ENCODE measurements at regions of chr11 and their contacts with region 1.

Region 1: DNA sequence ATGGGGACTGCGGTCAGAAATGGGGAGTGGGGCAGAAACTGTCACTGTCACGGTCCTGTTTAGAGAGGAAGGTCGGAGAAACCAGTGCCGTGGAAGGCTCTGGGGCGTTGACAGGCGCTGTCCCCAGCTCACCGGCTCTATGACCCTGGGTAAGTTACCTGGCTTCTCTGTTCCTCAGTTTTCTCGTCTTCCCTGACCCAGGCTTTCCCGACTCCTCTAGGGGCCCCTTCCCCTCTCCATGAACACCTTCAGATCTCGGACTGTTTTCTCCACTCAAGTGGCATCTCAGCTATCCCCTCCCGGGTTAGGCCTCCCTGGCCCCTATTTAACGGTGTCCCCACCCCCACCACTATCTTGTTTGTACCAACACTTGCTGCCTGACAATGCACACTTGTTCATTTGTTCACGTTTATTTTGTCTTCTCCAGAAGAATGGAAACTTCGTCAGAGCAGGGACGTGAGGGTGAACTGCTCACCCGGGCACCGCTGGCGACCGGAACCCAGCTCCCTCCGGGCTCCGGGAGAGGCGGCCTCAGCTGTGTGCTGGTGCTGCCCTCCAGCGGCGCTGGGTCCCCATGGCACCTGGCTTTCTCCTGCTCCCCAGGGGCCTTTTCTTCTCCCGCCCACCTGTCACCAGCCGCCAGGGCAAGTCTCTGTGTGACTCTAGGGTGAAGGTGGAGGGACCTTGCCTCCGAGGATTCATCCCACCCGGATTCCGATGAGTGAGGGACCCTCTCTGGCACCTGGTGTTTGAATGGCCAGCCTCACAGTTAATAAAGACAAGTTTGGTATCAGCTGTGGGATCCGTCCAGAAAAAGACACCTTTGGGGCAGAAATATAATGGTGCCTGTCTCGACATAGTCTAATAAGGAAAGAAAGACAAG is 33.1 kb upstream of the SLC35C1 start:
- DNase-seq: peak; percentile 92
- ATAC-seq: peak; percentile 93
- H3K4me3 Mint-ChIP-seq: peak overlapping the region; percentile 78
- H3K27ac Mint-ChIP-seq: no peak overlapping the region
- H3K4me1 Mint-ChIP-seq: peaks cover 2% of the 10 kb centered on the region; the same call in 1 of the 2 replicates
- H3K27me3 Mint-ChIP-seq: peaks cover 12% of the 10 kb centered on the region
- CTCF ChIP-seq: peak; percentile 65

Region 2: DNA sequence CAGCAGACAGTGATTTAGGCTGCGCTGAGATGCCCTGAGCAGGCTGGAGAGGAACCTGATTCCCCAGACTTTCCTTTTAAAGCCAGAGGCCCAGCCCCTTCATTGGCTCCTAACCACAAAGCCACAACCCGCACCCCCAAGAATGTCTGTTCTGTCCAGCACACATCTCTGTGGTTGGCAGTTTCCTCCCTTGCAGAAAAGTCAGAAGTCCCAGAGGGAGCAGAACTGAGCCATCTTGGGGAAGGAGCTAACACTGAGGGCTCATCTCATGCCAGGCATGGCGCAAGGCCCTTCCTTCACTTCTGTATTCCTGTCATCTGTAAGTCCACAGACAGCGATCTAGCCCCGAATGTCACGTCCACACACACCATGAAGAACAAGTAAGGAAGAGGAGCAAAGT is 388.6 kb before region 1 on chr11:
- CTCF ChIA-PET with region 1: interaction called, 10 read pairs
- POLR2A ChIA-PET with region 1: no interaction called
- DNase-seq: no peak
- ATAC-seq: no peak
- H3K4me3 Mint-ChIP-seq: no peak overlapping the region
- H3K27ac Mint-ChIP-seq: no peak overlapping the region
- H3K4me1 Mint-ChIP-seq: peaks cover 12% of the 10 kb centered on the region
- H3K27me3 Mint-ChIP-seq: peaks cover 7% of the 10 kb centered on the region
- CTCF ChIP-seq: no peak

Region 3: GRCh38 chr11:45563810-45564209 is 208.0 kb before region 1 on chr11:
- CTCF ChIA-PET with region 1: interaction called, 13 read pairs
- POLR2A ChIA-PET with region 1: no interaction called
- DNase-seq: no peak
- ATAC-seq: peak; percentile 34; the same call in 1 of the 2 replicates
- H3K4me3 Mint-ChIP-seq: no peak overlapping the region
- H3K27ac Mint-ChIP-seq: no peak overlapping the region
- H3K4me1 Mint-ChIP-seq: peaks cover 25% of the 10 kb centered on the region
- H3K27me3 Mint-ChIP-seq: no peaks in the 10 kb centered on the region; the same call in 1 of the 2 replicates
- CTCF ChIP-seq: no peak

Region 4: GRCh38 chr11:45671246-45672171 is 100.3 kb before region 1 on chr11:
- CTCF ChIA-PET with region 1: interaction called, 184 read pairs
- POLR2A ChIA-PET with region 1: no interaction called
- DNase-seq: no peak
- ATAC-seq: peak; percentile 67
- H3K4me3 Mint-ChIP-seq: no peak overlapping the region
- H3K27ac Mint-ChIP-seq: no peak overlapping the region
- H3K4me1 Mint-ChIP-seq: peaks cover 8% of the 10 kb centered on the region; the same call in 1 of the 2 replicates
- H3K27me3 Mint-ChIP-seq: peaks cover 20% of the 10 kb centered on the region
- CTCF ChIP-seq: no peak

Region 5: DNA sequence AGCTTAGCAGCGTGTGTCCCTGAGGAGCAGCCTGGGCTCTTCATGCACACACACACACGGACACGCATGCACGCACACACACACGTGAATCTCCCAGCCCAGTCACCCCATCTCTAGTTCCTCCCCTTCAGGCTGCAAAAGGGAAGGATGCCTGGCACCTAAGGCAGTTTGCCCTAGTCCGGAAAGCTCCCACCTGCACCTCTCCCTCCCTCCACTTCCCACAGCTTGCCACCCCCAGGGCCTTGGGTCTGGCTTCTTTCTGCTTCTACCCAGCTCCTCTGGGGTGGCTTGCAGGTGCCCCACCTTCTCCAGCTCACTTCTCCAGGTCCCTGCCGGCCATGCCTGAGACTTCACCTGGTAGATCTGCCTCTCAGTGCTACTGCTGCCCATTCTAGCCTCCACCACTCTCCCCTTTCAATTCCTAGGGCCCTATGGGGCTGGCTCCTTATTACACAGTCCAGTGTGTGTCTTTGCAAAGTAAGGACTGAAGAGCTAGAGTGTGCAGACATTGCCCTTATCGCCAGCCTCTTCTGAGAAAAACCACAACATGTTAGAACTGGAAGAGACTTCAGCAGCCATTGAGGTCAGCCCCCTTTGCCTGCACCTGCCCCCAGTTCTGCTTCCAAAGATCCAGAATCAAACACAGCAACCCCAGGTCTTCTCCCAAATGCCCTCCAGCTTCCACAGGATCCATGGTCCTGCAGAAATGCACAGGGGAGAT is 72.9 kb before region 1 on chr11:
- CTCF ChIA-PET with region 1: interaction called, 17 read pairs
- POLR2A ChIA-PET with region 1: no interaction called
- DNase-seq: no peak
- ATAC-seq: no peak
- H3K4me3 Mint-ChIP-seq: no peak overlapping the region
- H3K27ac Mint-ChIP-seq: no peak overlapping the region
- H3K4me1 Mint-ChIP-seq: peaks cover 6% of the 10 kb centered on the region; the same call in 1 of the 2 replicates
- H3K27me3 Mint-ChIP-seq: peaks cover 20% of the 10 kb centered on the region
- CTCF ChIP-seq: no peak

Region 6: DNA sequence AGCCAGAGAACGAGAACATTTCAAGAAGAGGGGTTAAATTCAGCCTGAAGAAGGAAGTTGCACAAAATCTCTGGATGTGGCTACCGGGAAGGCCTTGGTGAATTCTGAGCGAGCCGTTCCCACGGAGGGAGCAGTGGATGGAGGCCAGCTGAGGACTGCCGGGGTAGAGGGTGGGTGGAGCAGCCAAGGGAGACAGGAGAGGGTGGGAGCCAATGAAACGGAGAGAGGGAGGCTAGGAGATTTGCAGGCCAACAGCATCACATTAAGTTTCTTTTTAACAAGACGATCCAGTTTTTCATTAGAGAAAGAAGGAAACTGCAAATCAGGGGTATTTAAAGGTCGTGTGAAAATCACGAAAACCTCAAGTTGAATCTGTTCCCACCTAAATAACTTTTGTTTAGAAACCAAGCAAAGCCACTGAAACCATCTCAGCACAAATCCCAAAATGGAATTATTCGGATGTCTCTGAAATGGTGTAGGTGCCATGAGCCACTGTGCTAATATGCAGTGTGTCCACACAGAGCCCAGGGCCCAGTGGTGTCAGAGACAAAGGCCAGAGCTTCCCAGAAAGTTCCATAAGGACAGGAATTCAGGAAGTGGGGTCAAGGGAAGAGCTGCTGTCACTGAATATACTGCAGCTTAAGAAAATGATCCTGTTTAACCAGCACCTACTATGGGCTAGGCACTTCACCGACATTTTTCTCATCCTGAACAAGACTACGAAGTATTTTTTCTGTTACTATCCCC is 26.6 kb before region 1 on chr11:
- CTCF ChIA-PET with region 1: interaction called, 25 read pairs
- POLR2A ChIA-PET with region 1: no interaction called
- DNase-seq: no peak
- ATAC-seq: peak; percentile 81
- H3K4me3 Mint-ChIP-seq: no peak overlapping the region
- H3K27ac Mint-ChIP-seq: peak overlapping the region; percentile 23; the same call in 1 of the 2 replicates
- H3K4me1 Mint-ChIP-seq: peaks cover 19% of the 10 kb centered on the region
- H3K27me3 Mint-ChIP-seq: no peaks in the 10 kb centered on the region; the same call in 1 of the 2 replicates
- CTCF ChIP-seq: no peak

Region 7: GRCh38 chr11:45859661-45860140 is 87.9 kb after region 1 on chr11:
- CTCF ChIA-PET with region 1: interaction called, 11 read pairs
- POLR2A ChIA-PET with region 1: no interaction called
- DNase-seq: peak; percentile 46
- ATAC-seq: peak; percentile 63
- H3K4me3 Mint-ChIP-seq: no peak overlapping the region
- H3K27ac Mint-ChIP-seq: no peak overlapping the region
- H3K4me1 Mint-ChIP-seq: peaks cover 28% of the 10 kb centered on the region
- H3K27me3 Mint-ChIP-seq: no peaks in the 10 kb centered on the region
- CTCF ChIP-seq: no peak

Region 8: GRCh38 chr11:45885274-45885920 is 113.6 kb after region 1 on chr11 and contains the start of gene MAPK8IP1:
- CTCF ChIA-PET with region 1: no interaction called
- POLR2A ChIA-PET with region 1: no interaction called
- DNase-seq: peak; percentile 76
- ATAC-seq: peak; percentile 80
- H3K4me3 Mint-ChIP-seq: peak within 1 kb of the TSS; percentile 70
- H3K27ac Mint-ChIP-seq: no peak within 1 kb of the TSS
- H3K4me1 Mint-ChIP-seq: no peaks in the 10 kb centered on the region
- H3K27me3 Mint-ChIP-seq: peaks cover 7% of the 10 kb centered on the region; the same call in 1 of the 2 replicates
- CTCF ChIP-seq: no peak
- total RNA-seq, gene MAPK8IP1: 31.6 to 34.1 TPM (median 32.4 TPM) in 3 replicates

Region 9: GRCh38 chr11:45933131-45933831 is 161.5 kb after region 1 on chr11:
- CTCF ChIA-PET with region 1: no interaction called
- POLR2A ChIA-PET with region 1: no interaction called
- DNase-seq: no peak
- ATAC-seq: no peak
- H3K4me3 Mint-ChIP-seq: no peak overlapping the region
- H3K27ac Mint-ChIP-seq: no peak overlapping the region; the same call in 1 of the 2 replicates
- H3K4me1 Mint-ChIP-seq: peaks cover 6% of the 10 kb centered on the region
- H3K27me3 Mint-ChIP-seq: no peaks in the 10 kb centered on the region; the same call in 1 of the 2 replicates
- CTCF ChIP-seq: no peak

Region 10: GRCh38 chr11:45974806-45975205 is 203.0 kb after region 1 on chr11:
- CTCF ChIA-PET with region 1: no interaction called
- POLR2A ChIA-PET with region 1: no interaction called
- DNase-seq: no peak
- ATAC-seq: no peak
- H3K4me3 Mint-ChIP-seq: no peak overlapping the region
- H3K27ac Mint-ChIP-seq: no peak overlapping the region
- H3K4me1 Mint-ChIP-seq: no peaks in the 10 kb centered on the region
- H3K27me3 Mint-ChIP-seq: no peaks in the 10 kb centered on the region
- CTCF ChIP-seq: no peak